PC-9 (cell line): ENCODE measurements at regions of chr19 and their contacts with region 1.

Region 1: DNA sequence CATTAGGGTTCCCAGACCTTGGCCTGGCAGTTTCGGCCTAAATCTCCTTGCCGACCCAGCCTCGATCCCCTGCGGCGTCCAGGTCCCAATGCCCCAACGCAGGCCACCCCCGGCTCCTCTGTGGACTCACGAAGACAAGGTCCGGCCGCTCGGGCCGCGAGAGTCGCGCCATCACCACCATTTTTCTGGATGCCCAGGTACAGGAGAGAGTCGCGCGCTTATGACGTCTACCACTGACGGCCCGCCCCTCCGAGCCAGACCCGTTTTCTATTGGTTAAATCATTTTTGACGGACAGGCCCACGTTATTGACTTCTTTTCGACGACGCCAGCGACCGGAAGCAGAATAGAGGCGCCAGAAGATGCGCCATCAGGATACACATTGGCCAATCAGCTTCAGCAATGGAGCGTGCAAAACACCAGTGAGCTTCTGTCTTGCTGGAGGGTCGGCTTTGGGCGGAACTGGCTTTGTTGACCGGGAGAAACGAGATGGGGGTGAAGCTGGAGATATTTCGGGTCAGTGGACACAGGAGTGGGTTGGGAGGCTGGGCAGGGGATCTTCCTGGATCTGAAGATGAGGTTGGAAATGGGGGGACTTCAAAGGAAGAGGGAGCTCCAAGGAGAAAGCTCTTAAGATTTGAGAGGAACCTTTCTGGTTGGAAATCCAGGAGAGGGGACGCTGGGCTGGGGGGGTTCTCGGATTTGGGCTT is at the starts of genes PET100 and XAB2:
- DNase-seq: peak; percentile 95 to 98
- H3K4me3 ChIP-seq: peak within 1 kb of the TSS; percentile 92
- H3K27ac ChIP-seq: peak within 1 kb of the TSS; percentile 45
- H3K4me1 ChIP-seq: peaks cover 18% of the 10 kb centered on the region
- H3K27me3 ChIP-seq: no peaks in the 10 kb centered on the region
- CTCF ChIP-seq: no peak
- total RNA-seq, gene PET100: 149 and 222 TPM in 2 replicates
- total RNA-seq, gene XAB2: 44.9 and 51.3 TPM in 2 replicates

Region 2: GRCh38 chr19:7386308-7386707 is 243.2 kb before region 1 on chr19:
- CTCF ChIA-PET with region 1: no interaction called
- POLR2A ChIA-PET with region 1: interaction called, 15 read pairs
- intact Hi-C with region 1: no loop called
- DNase-seq: peak; percentile 50 to 57
- H3K4me3 ChIP-seq: no peak overlapping the region
- H3K27ac ChIP-seq: no peak overlapping the region
- H3K4me1 ChIP-seq: peaks cover 30% of the 10 kb centered on the region
- H3K27me3 ChIP-seq: no peaks in the 10 kb centered on the region
- CTCF ChIP-seq: peak; percentile 47

Region 3: GRCh38 chr19:7699417-7700401 is 70.2 kb after region 1 on chr19:
- CTCF ChIA-PET with region 1: no interaction called
- POLR2A ChIA-PET with region 1: no interaction called
- intact Hi-C with region 1: no loop called
- DNase-seq: peak in 1 of 2 experiments; percentile 15
- H3K4me3 ChIP-seq: no peak overlapping the region
- H3K27ac ChIP-seq: no peak overlapping the region
- H3K4me1 ChIP-seq: no peaks in the 10 kb centered on the region
- H3K27me3 ChIP-seq: peaks cover 65% of the 10 kb centered on the region
- CTCF ChIP-seq: no peak